Sciatic nerve (tissue), 2 donors: ENCODE measurements at regions of chr10 and their contacts with region 1.

Region 1: GRCh38 chr10:35540296-35541164 is 64.6 kb upstream of the GJD4 start:
- DNase-seq: no peak
- ATAC-seq: no peak

Region 2: DNA sequence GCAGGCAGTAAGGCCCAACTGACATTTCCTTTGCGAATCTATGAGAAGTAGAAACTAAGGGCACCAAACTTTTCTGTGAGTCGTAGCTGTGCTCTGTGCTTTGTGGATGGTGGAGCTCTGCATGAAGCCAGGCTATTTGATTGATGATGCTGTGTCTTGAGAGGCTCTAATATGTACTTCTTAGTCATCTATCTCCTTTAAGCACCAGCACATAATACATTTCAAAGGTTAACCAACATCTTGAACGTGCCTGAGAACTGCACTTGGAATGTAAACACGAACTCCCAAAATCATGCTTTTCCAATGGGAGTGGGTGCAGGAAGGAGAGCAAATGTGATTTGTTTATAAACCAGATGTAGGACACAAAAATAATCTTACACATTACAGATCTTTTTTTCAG is 1137.0 kb before region 1 on chr10:
- intact Hi-C with region 1: loop called (anchors 5 kb)
- DNase-seq: no peak
- ATAC-seq: no peak